ENCODE measurements at regions of chr1 and their contacts with region 1.

Region 1: DNA sequence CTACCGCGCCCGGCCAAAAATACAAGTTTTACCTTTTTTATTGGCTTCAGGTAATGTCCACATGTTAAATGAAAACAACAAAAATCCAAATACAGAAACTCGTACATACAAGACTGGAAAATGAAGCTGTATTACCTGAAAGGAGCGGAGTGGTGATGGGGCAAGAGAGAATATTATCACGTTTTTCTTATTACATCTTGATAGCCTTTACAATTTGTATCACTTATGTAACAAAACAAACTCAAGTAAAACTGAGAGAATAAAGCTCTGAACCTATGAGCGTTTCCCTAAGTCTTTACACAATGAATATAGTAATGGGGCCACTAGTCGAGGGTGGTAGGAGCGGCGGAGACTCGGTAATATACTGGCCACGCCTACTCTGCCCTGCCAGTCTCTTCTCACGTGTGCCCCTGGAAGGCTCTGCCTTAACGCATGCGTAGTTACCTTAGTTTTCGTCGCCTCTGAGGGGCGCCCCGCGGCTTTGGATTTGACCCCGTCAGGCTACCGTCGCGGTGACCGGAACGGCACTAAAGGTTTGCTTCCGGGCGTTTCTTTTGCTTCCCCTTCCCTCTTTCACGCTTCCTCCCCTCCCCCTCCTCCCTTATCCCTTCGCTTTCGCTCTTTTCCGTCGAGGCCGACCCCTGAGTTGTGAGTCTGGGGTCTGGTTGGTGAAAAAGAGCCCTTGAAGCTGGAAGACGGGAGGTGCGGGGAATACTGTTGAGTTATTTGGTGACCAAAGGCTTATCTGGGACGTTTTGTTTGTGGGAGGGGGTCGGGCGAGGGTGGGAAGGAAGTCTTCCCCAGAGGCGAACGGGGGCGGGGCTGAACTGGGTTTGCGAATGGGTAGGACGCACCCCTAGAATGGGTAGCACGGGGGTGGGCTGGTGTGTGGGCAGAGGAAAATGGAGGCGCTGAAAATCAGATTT is at the start of gene SETDB1:
- DNase-seq: peak; percentile 97
- ATAC-seq: peak; percentile 89
- H3K4me3 Mint-ChIP-seq: peak within 1 kb of the TSS; percentile 89
- H3K27ac Mint-ChIP-seq: peak within 1 kb of the TSS; percentile 96
- H3K4me1 Mint-ChIP-seq: peaks cover 29% of the 10 kb centered on the region
- H3K27me3 Mint-ChIP-seq: no peaks in the 10 kb centered on the region
- total RNA-seq, gene SETDB1: 48.8 to 52.7 TPM

Region 2: GRCh38 chr1:150321826-150322166 is 604.3 kb before region 1 on chr1:
- CTCF ChIA-PET with region 1: no interaction called
- POLR2A ChIA-PET with region 1: interaction called, 3 read pairs
- intact Hi-C with region 1: loop called in 1 of 2 experiments (anchors 5 kb)
- DNase-seq: no peak
- ATAC-seq: no peak
- H3K4me3 Mint-ChIP-seq: peak overlapping the region; percentile 93
- H3K27ac Mint-ChIP-seq: peak overlapping the region; percentile 100
- H3K4me1 Mint-ChIP-seq: peaks cover 27% of the 10 kb centered on the region
- H3K27me3 Mint-ChIP-seq: no peaks in the 10 kb centered on the region

Region 3: DNA sequence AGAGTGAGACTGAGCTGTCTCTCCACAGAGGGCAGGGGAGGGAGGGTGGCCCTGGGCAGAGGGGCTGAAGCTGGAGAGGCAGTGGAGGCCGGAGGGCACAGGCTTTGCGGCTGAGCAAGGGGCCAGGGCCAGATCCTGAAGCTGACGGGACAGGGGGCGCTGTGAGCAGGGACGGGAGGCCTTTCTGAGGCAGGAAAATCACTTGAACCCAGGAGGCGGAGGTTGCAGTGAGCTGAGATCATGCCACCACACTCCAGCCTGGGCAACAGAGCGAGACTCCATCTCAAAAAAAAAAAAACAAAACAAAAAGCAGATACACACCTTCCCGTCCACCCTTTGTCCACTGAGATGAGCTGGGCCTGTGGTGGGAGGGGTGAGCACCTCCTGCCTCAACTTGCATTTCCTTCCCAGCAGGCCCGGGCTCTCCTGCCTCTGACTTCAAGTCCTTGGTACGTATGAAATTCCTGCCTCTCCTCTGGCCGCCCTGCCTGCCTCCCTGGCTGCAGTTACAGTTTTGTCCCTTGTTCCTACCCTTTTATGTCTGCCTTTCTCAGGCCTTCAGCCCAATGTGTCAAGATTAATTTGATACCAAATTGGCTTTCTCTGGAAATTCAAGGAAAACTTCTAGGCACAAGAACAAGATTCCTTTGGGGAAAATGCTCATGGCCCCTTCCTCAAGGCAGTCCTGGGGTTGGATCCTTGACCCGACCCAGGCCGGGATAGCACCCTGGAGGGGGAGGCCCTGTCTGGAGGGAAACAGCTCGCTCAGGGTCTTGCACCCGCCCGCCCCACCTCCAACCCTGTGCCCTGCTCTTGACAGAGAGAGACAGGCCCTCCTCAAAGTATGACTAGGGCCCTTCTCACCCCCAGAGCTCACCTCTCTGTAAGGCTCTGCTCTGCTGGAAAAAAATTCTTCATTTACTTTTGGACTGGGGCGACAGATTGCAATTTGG is 388.1 kb before region 1 on chr1:
- CTCF ChIA-PET with region 1: no interaction called
- POLR2A ChIA-PET with region 1: no interaction called
- intact Hi-C with region 1: no loop called
- DNase-seq: no peak
- ATAC-seq: no peak
- H3K4me3 Mint-ChIP-seq: no peak overlapping the region
- H3K27ac Mint-ChIP-seq: no peak overlapping the region
- H3K4me1 Mint-ChIP-seq: no peaks in the 10 kb centered on the region
- H3K27me3 Mint-ChIP-seq: no peaks in the 10 kb centered on the region

Region 4: GRCh38 chr1:150613061-150613920 is 312.8 kb before region 1 on chr1:
- CTCF ChIA-PET with region 1: no interaction called
- POLR2A ChIA-PET with region 1: interaction called, 5 read pairs
- intact Hi-C with region 1: loop called in 1 of 2 experiments (anchors 1 kb)
- DNase-seq: peak; percentile 78
- ATAC-seq: peak; percentile 63
- H3K4me3 Mint-ChIP-seq: peak overlapping the region; percentile 60
- H3K27ac Mint-ChIP-seq: peak overlapping the region; percentile 90
- H3K4me1 Mint-ChIP-seq: peaks cover 67% of the 10 kb centered on the region
- H3K27me3 Mint-ChIP-seq: no peaks in the 10 kb centered on the region

Region 5: DNA sequence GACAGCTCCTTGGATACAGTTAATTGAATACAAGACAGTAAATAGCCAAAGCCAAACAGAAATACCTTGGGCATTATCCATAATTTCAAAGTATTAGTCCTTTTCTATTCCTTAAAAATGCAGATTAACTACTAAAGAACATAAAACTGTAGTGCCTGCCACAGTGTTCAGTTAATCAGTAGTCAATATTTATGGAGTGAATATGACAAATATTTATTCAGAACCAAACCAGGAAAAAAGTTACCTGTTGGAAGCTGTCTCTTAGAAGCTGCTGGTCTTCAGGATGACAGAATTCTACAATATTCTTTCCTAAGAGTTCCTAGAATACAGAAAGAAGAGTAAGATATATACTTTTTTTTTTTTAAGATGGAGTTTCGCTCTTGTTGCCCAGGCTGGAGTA is 99.8 kb before region 1 on chr1:
- CTCF ChIA-PET with region 1: interaction called, 14 read pairs
- POLR2A ChIA-PET with region 1: no interaction called
- intact Hi-C with region 1: no loop called
- DNase-seq: no peak
- ATAC-seq: no peak
- H3K4me3 Mint-ChIP-seq: no peak overlapping the region
- H3K27ac Mint-ChIP-seq: no peak overlapping the region
- H3K4me1 Mint-ChIP-seq: peaks cover under 1% of the 10 kb centered on the region
- H3K27me3 Mint-ChIP-seq: no peaks in the 10 kb centered on the region

Region 6: DNA sequence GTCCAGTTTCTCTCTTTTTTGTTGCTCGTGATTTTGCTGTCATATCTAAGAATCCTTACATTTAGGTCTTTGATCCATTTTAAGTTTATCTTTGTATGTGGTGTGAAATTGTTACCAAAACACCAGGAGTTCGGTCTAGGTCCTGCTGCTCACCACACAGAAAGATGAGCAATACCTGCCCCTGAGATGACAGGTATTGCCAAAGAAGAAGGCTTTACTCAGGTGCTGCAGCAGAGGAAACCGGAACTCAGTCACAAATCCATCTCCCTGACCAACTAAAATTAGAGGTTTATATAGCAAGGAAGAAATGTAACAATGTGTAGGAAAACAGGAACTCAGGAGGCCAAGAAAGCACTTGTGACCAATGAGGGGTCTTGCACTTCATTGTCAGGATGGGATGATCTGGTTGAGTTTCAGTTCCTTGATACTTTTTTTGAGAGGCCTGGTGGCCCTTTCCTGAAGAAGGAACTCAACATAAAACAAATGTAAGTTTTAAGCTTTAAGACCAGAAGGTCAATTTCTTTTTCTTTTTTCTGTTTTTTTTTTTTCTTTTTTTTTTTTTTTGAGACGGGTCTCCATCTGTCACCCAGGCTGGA is 16.4 kb before region 1 on chr1:
- CTCF ChIA-PET with region 1: interaction called, 7 read pairs
- POLR2A ChIA-PET with region 1: no interaction called
- intact Hi-C with region 1: loop called in 1 of 2 experiments (anchors 2 kb)
- DNase-seq: no peak
- ATAC-seq: no peak
- H3K4me3 Mint-ChIP-seq: no peak overlapping the region
- H3K27ac Mint-ChIP-seq: no peak overlapping the region
- H3K4me1 Mint-ChIP-seq: peaks cover 7% of the 10 kb centered on the region
- H3K27me3 Mint-ChIP-seq: no peaks in the 10 kb centered on the region

Region 7: GRCh38 chr1:151070474-151071276 is 144.6 kb after region 1 on chr1 and contains the start of gene GABPB2:
- CTCF ChIA-PET with region 1: no interaction called
- POLR2A ChIA-PET with region 1: interaction called, 5 read pairs
- intact Hi-C with region 1: loop called in 1 of 2 experiments (anchors 5 kb)
- DNase-seq: peak; percentile 93
- ATAC-seq: peak; percentile 86
- H3K4me3 Mint-ChIP-seq: peak within 1 kb of the TSS; percentile 99
- H3K27ac Mint-ChIP-seq: peak within 1 kb of the TSS; percentile 100
- H3K4me1 Mint-ChIP-seq: peaks cover 18% of the 10 kb centered on the region
- H3K27me3 Mint-ChIP-seq: no peaks in the 10 kb centered on the region
- total RNA-seq, gene GABPB2: 16.6 to 19.2 TPM